Activated CD4-positive, alpha-beta memory T cell treated with anti-CD3 and anti-CD28 coated beads for 36 hours (primary cell): ENCODE measurements at regions of chr13 and their contacts with region 1.

Region 1: DNA sequence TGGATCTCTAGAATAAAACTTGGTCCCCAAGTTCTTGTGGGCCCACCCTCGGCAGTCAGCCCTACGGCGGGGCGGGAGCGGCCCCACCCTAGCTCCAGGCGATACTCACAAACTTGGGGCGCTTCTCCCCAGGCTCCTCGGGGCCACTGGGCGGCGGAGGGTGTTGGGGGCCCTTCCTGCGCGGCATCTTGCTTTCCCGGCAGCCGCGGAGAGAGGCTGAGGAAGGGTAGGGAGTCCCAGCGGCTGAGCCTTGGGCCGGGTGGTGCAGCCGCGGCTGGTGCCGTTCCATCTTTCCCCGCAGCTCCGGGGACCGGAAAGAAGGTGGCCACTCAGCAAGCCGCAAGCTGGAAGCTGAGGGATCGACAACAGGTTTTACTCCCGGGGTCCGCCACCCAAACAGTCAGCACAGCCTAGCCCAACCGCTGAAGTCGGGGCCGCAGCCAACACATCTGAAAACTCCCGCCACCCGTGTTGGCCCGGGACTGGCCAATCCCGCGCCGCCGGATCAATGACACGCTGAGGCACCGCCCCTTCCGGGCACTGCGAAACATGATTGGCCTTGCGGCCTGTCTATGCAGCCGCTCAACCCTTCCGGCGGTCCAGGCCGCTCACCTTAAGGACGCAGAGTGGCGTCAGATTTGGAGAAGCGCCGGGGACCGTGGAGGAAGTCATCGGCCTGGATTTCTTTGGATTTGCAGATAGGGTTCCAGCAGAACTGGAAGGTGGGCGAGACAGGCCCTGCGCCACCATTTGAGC is at the start of gene DIAPH3:
- DNase-seq: peak; percentile 97
- H3K4me3 Mint-ChIP-seq: peak within 1 kb of the TSS; percentile 92
- H3K27ac Mint-ChIP-seq: peak within 1 kb of the TSS; percentile 90
- H3K4me1 Mint-ChIP-seq: peaks cover 32% of the 10 kb centered on the region
- H3K27me3 Mint-ChIP-seq: no peaks in the 10 kb centered on the region
- total RNA-seq, gene DIAPH3: 31.3 to 31.9 TPM

Region 2: DNA sequence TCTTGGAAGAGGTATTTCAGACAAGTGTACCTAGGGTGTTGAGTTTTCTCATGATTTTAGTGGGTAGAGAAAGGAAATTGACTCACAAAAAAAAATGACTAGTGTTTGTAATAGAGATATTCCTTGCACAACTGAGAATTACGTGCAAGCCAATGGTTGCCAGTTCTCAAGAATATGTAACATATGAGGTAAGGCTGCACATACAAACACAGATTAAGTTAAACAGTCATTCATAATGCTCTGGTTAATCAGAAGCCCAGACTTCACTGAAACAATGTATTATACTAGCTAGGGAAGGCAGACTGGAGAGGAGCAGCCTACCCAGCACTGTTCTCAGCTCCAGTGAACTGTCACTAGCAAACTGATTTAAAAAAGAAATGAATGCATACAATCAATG is 418.3 kb before region 1 on chr13:
- CTCF ChIA-PET with region 1: no interaction called
- POLR2A ChIA-PET with region 1: no interaction called
- intact Hi-C with region 1: loop called (anchors 5 kb)
- DNase-seq: no peak
- H3K4me3 Mint-ChIP-seq: no peak overlapping the region
- H3K27ac Mint-ChIP-seq: no peak overlapping the region
- H3K4me1 Mint-ChIP-seq: peaks cover 5% of the 10 kb centered on the region
- H3K27me3 Mint-ChIP-seq: peaks cover 2% of the 10 kb centered on the region

Region 3: GRCh38 chr13:60090574-60090973 is 73.1 kb before region 1 on chr13:
- CTCF ChIA-PET with region 1: no interaction called
- POLR2A ChIA-PET with region 1: no interaction called
- intact Hi-C with region 1: no loop called
- DNase-seq: no peak
- H3K4me3 Mint-ChIP-seq: no peak overlapping the region
- H3K27ac Mint-ChIP-seq: no peak overlapping the region
- H3K4me1 Mint-ChIP-seq: no peaks in the 10 kb centered on the region
- H3K27me3 Mint-ChIP-seq: no peaks in the 10 kb centered on the region

Region 4: GRCh38 chr13:60363288-60363687 is 199.6 kb after region 1 on chr13:
- CTCF ChIA-PET with region 1: no interaction called
- POLR2A ChIA-PET with region 1: no interaction called
- intact Hi-C with region 1: no loop called
- DNase-seq: no peak
- H3K4me3 Mint-ChIP-seq: no peak overlapping the region
- H3K27ac Mint-ChIP-seq: no peak overlapping the region
- H3K4me1 Mint-ChIP-seq: no peaks in the 10 kb centered on the region
- H3K27me3 Mint-ChIP-seq: peaks cover 10% of the 10 kb centered on the region

Region 5: DNA sequence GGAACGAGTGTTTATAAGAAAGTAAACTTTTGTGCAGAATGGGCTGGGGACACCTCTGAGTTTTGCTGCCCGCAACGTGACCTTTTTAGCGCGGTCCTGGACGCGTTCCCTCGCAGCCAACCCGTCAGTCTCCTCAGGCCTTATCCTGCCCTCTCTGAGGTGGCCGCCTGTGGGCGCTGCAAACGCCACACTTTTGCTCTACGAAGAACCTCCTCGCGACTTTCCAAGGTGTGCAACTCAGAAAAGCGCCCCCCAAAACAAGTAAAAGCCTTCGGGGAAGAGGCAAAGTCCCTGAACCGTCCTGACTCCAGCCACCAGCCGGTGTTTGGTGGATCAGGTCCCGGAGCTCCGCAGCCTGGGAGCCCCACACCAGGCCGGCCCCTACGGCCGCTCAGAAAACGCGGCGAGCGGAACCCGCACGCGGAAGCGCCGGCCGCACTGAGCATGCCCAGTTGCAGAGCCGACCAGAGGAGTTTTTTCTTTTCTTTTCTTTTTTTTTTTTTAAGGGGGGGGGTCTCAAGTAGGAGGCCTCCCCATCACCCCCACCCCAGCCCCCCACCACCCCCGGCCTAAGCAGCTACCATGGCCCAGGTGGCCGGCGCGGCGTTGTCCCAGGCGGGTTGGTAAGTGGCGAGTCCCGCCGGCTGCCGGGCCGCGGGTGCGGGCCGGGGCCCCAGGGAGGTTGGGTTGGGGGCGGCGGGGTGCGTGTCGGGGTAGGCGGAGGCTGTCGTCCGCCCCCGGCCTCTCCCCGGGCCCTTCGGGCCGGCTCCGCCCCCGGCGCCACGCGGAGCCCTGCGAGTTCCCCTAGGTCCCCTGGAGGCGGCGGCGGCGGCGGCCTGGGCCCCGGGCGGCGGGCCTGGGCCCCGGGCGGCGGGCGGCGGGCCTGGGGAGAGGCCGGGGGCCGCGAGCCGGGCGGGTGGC is 233.4 kb after region 1 on chr13 and contains the start of gene TDRD3:
- CTCF ChIA-PET with region 1: interaction called, 3 read pairs
- POLR2A ChIA-PET with region 1: interaction called, 3 read pairs
- intact Hi-C with region 1: loop called (anchors 1 kb)
- DNase-seq: peak; percentile 89
- H3K4me3 Mint-ChIP-seq: peak within 1 kb of the TSS; percentile 90
- H3K27ac Mint-ChIP-seq: peak within 1 kb of the TSS; percentile 95
- H3K4me1 Mint-ChIP-seq: peaks cover 31% of the 10 kb centered on the region
- H3K27me3 Mint-ChIP-seq: no peaks in the 10 kb centered on the region
- total RNA-seq, gene TDRD3: 16.4 to 16.5 TPM

Region 6: DNA sequence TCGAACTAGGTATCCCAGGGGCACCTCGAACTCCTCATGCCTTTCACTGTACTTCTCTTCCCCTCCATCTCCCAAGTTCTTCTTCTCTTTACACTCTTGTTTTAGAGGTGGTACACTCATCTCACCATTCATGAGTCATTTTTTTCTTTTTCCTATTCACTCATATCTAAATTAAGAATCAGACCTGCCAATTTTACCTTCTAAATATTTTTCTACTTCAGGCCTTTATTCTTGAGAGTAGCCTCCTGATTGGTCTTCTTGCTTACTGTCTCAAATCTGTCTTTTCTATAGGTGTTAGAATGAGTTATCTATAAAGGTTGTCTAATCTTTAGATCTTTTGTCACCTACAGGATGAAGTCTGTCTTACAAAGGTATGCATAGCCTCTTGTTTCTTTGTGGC is 254.1 kb after region 1 on chr13:
- CTCF ChIA-PET with region 1: no interaction called
- POLR2A ChIA-PET with region 1: no interaction called
- intact Hi-C with region 1: loop called (anchors 5 kb)
- DNase-seq: no peak
- H3K4me3 Mint-ChIP-seq: no peak overlapping the region
- H3K27ac Mint-ChIP-seq: no peak overlapping the region
- H3K4me1 Mint-ChIP-seq: peaks cover 16% of the 10 kb centered on the region
- H3K27me3 Mint-ChIP-seq: no peaks in the 10 kb centered on the region